ENCODE measurements at regions of chr12 and their contacts with region 1.

Region 1: GRCh38 chr12:109110988-109111495 is 5.3 kb upstream of the ACACB start:
- DNase-seq: no peak
- H3K4me3 Mint-ChIP-seq: peak overlapping the region; percentile 67
- H3K27ac Mint-ChIP-seq: peak overlapping the region; percentile 23
- H3K4me1 Mint-ChIP-seq: no peaks in the 10 kb centered on the region
- H3K27me3 Mint-ChIP-seq: no peaks in the 10 kb centered on the region
- CTCF ChIP-seq: no peak

Region 2: GRCh38 chr12:109065154-109065852 is 45.7 kb before region 1 on chr12:
- CTCF ChIA-PET with region 1: no interaction called
- POLR2A ChIA-PET with region 1: no interaction called
- intact Hi-C with region 1: no loop called
- DNase-seq: no peak
- H3K4me3 Mint-ChIP-seq: no peak overlapping the region
- H3K27ac Mint-ChIP-seq: no peak overlapping the region
- H3K4me1 Mint-ChIP-seq: no peaks in the 10 kb centered on the region
- H3K27me3 Mint-ChIP-seq: no peaks in the 10 kb centered on the region
- CTCF ChIP-seq: no peak

Region 3: GRCh38 chr12:109093022-109093918 is 17.8 kb before region 1 on chr12 and contains the start of gene ALKBH2:
- CTCF ChIA-PET with region 1: interaction called, 35 read pairs
- POLR2A ChIA-PET with region 1: interaction called, 25 read pairs
- intact Hi-C with region 1: no loop called
- DNase-seq: peak; percentile 90
- H3K4me3 Mint-ChIP-seq: peak within 1 kb of the TSS; percentile 83
- H3K27ac Mint-ChIP-seq: peak within 1 kb of the TSS; percentile 85
- H3K4me1 Mint-ChIP-seq: peaks cover 23% of the 10 kb centered on the region
- H3K27me3 Mint-ChIP-seq: no peaks in the 10 kb centered on the region
- CTCF ChIP-seq: peak; percentile 88
- total RNA-seq, gene ALKBH2: 38.9 and 48.9 TPM in 2 replicates

Region 4: GRCh38 chr12:109134186-109134917 is 23.3 kb after region 1 on chr12:
- CTCF ChIA-PET with region 1: interaction called, 12 read pairs
- POLR2A ChIA-PET with region 1: interaction called, 4 read pairs
- intact Hi-C with region 1: no loop called
- DNase-seq: peak; percentile 70
- H3K4me3 Mint-ChIP-seq: no peak overlapping the region
- H3K27ac Mint-ChIP-seq: peak overlapping the region; percentile 49
- H3K4me1 Mint-ChIP-seq: peaks cover 11% of the 10 kb centered on the region
- H3K27me3 Mint-ChIP-seq: peaks cover 13% of the 10 kb centered on the region
- CTCF ChIP-seq: peak; percentile 45

Region 5: GRCh38 chr12:109255377-109255776 is 144.3 kb after region 1 on chr12:
- CTCF ChIA-PET with region 1: interaction called, 11 read pairs
- POLR2A ChIA-PET with region 1: interaction called, 4 read pairs
- intact Hi-C with region 1: loop called (anchors 2 kb)
- DNase-seq: peak; percentile 38
- H3K4me3 Mint-ChIP-seq: no peak overlapping the region
- H3K27ac Mint-ChIP-seq: no peak overlapping the region
- H3K4me1 Mint-ChIP-seq: no peaks in the 10 kb centered on the region
- H3K27me3 Mint-ChIP-seq: no peaks in the 10 kb centered on the region
- CTCF ChIP-seq: no peak

Region 6: DNA sequence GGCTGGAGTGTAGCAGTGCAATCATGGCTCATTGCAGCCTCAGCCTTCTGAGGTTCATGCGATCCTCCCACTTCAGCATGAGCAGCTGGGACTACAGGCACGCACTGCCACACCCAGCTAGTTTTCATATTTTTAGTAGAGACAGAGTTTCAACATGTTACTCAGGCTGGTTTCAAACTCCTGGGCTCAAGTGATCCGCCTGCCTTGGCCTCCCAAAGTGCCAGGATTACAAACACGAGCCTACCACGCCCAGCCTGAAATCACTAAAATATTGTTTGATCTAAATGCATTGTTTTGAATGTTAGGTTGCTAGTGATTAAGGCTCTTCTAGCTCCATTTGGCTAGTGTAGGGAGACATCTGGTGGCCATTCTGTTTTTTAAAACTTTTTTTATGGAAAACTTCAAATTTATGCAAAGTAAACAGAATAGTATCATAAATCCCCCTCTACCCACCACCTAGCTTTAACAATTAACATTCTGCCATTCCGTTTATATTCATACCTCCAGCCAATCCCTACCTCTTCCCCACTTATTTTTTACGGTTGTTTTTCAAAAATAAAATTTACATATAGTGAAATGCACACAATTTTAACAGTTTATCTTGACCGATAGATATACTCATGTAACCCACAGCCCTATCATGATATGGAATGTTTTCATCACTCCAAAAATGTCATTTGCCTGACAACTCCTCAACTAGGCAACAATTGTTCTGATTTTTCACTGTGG is 274.5 kb after region 1 on chr12:
- CTCF ChIA-PET with region 1: interaction called, 16 read pairs
- POLR2A ChIA-PET with region 1: interaction called, 4 read pairs
- intact Hi-C with region 1: loop called (anchors 1 kb)
- DNase-seq: peak; percentile 52
- H3K4me3 Mint-ChIP-seq: peak overlapping the region; percentile 41
- H3K27ac Mint-ChIP-seq: peak overlapping the region; percentile 86
- H3K4me1 Mint-ChIP-seq: peaks cover 11% of the 10 kb centered on the region
- H3K27me3 Mint-ChIP-seq: peaks cover 23% of the 10 kb centered on the region
- CTCF ChIP-seq: peak; percentile 67

Measured in MCF 10A (cell line).